Activated CD8-positive, alpha-beta T cell treated with anti-CD3 and anti-CD28 coated beads for 36 hours (primary cell): ENCODE measurements at regions of chr10 and their contacts with region 1.

Region 1: DNA sequence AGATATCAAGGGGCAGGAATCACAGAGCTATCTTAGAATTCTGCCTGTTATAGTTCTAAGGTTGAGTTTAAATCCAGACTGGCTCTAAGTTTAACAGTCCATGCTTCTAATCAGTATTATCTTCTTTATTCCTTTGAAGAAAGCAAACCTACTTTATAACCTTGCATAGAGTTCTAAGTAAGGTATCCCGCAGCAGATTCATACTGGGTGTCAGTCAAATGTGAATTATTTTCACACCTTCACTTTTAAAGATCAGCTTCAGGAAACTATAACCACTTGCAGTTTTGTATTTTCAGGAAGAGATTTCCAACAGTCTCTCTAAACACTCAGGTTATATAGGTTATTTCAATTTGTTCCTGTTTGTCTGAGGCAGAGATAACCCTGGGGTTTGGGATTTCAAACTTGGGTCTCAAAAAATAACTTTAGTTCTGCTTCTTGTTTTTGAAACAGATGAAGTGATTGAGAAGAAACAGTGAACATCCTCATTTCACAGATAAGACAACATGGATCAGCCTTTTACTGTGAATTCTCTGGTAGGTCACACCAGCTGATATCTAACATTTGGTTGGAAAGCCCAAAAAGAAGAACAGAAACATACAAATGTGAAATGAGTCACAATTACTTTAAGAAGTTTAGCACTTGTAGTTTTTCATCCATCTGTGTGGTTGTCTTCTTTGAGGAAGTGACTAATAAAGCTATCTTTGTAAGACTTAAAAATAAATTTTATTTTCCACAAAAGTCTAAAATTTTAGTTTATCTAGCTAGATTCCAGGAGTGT is 21.4 kb downstream of the STAMBPL1 start:
- DNase-seq: no peak
- ATAC-seq: peak; percentile 56
- H3K4me3 Mint-ChIP-seq: peak overlapping the region; percentile 53
- H3K27ac Mint-ChIP-seq: peak overlapping the region; percentile 96
- H3K4me1 Mint-ChIP-seq: peaks cover 63% of the 10 kb centered on the region
- H3K27me3 Mint-ChIP-seq: no peaks in the 10 kb centered on the region
- CTCF ChIP-seq: no peak

Region 2: DNA sequence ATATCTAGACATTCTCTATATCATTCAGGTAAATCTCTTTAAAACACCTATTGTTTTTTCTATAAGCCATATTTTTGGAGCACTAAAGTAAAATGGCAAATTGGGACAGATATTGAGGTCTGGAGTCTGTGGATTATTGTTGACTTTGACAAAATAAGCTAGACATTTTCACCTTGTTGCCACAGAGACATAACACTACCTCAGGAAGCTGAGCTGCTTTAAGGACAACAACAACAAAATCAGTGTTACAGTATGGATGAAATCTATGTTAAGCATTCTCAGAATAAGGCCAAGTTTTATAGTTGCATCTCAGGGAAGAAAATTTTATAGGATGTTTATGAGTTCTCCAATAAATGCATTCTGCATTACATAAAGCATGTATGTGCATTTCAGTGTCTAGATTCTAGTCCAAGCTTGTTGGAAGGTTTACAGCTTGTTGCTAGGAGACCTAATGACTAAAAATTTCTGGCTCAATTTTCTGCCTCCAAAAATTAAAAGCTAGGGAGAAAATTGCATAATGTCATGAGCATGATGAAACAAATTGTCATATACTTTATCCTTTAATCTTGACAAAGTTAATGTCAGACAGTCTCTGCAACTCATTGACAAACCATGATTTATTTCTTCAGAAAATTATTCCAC is 80.5 kb before region 1 on chr10:
- CTCF ChIA-PET with region 1: no interaction called
- POLR2A ChIA-PET with region 1: no interaction called
- intact Hi-C with region 1: no loop called
- DNase-seq: no peak
- ATAC-seq: no peak
- H3K4me3 Mint-ChIP-seq: no peak overlapping the region
- H3K27ac Mint-ChIP-seq: no peak overlapping the region
- H3K4me1 Mint-ChIP-seq: peaks cover 18% of the 10 kb centered on the region
- H3K27me3 Mint-ChIP-seq: no peaks in the 10 kb centered on the region
- CTCF ChIP-seq: no peak

Region 3: GRCh38 chr10:88851706-88852105 is 49.7 kb before region 1 on chr10 and contains the start of gene ANKRD22:
- CTCF ChIA-PET with region 1: interaction called, 3 read pairs
- POLR2A ChIA-PET with region 1: no interaction called
- intact Hi-C with region 1: loop called (anchors 5 kb)
- DNase-seq: no peak
- ATAC-seq: no peak
- H3K4me3 Mint-ChIP-seq: no peak within 1 kb of the TSS
- H3K27ac Mint-ChIP-seq: no peak within 1 kb of the TSS
- H3K4me1 Mint-ChIP-seq: peaks cover 15% of the 10 kb centered on the region
- H3K27me3 Mint-ChIP-seq: peaks cover 4% of the 10 kb centered on the region
- CTCF ChIP-seq: no peak
- total RNA-seq, gene ANKRD22: not detected

Region 4: DNA sequence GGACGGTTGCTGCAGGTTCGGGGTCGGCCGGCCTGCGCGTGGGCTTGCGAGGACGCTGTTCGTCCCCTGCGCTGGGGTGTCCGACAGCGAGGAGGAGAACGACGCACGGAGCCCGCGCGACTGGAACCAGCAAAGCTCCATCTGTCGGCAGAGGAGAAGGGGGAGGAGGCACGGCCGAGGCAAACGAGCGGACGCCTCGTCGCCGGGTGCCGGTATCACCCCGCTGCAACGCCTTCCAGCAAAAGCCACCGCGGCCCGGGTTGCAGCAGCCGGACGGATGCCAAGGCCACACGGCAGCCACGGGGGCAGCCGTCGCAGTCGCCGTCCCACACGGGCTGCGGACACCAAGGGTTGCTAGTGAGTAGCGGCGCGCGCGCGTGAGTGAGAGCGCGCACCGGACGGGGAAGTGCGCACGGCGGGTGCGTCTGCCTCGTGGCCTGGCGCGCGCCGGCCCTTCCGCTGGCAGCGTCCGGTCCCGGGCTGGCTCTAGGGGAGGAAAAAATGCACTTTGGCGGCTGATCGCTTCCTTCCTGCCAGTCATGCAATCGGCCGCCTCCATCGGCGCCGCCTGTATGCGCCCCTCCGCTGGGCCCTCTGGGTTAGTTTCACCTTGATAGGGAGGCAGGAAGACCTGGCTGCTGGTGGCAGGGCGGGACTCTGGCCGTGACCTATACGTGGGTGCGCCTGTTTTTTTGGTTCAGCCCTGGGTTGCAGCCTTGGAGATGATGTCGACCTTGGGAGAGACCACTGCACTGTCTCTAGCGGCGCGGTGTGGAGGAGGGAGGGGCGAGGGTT is 20.9 kb before region 1 on chr10:
- CTCF ChIA-PET with region 1: interaction called, 18 read pairs
- POLR2A ChIA-PET with region 1: interaction called, 16 read pairs
- intact Hi-C with region 1: no loop called
- DNase-seq: peak; percentile 89
- ATAC-seq: peak; percentile 83
- H3K4me3 Mint-ChIP-seq: peak overlapping the region; percentile 91
- H3K27ac Mint-ChIP-seq: peak overlapping the region; percentile 98
- H3K4me1 Mint-ChIP-seq: peaks cover 61% of the 10 kb centered on the region
- H3K27me3 Mint-ChIP-seq: no peaks in the 10 kb centered on the region
- CTCF ChIP-seq: no peak

Region 5: DNA sequence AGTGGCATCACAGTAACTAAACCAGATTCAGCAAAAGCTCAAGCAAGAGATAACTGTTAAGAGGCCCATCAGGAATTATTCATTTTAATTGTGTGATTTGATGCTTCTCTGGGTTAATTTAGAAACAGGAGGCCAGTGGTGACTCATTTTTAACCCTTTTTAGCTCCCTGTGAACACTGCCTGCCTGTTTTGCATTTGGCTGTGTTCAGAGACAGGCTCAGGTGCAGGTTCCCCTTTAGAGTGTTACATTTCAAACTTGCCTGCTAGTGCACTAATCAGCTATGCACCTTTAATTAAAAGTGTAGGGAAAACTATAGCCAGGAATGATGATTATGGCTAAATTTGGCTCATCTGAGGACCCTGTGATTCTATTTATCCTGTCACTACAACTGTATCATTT is 14.8 kb before region 1 on chr10:
- CTCF ChIA-PET with region 1: interaction called, 18 read pairs
- POLR2A ChIA-PET with region 1: interaction called, 16 read pairs
- intact Hi-C with region 1: no loop called
- DNase-seq: peak; percentile 44
- ATAC-seq: peak; percentile 90
- H3K4me3 Mint-ChIP-seq: no peak overlapping the region
- H3K27ac Mint-ChIP-seq: peak overlapping the region; percentile 5
- H3K4me1 Mint-ChIP-seq: peaks cover 81% of the 10 kb centered on the region
- H3K27me3 Mint-ChIP-seq: no peaks in the 10 kb centered on the region
- CTCF ChIP-seq: no peak

Region 6: DNA sequence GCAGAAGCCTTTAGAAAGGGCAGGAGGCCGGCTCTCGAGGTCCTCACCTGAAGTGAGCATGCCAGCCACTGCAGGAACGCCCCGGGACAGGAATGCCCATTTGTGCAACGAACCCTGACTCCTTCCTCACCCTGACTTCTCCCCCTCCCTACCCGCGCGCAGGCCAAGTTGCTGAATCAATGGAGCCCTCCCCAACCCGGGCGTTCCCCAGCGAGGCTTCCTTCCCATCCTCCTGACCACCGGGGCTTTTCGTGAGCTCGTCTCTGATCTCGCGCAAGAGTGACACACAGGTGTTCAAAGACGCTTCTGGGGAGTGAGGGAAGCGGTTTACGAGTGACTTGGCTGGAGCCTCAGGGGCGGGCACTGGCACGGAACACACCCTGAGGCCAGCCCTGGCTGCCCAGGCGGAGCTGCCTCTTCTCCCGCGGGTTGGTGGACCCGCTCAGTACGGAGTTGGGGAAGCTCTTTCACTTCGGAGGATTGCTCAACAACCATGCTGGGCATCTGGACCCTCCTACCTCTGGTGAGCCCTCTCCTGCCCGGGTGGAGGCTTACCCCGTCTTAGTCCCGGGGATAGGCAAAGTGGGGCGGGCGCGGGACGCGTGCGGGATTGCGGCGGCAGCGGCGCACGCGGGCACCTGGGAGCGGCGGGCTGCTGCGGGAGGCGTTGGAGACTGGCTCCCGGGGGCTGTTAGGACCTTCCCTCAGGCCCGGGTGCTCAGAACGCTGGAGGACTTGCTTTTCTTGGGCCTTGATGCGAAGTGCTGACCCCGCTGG is 89.2 kb after region 1 on chr10 and contains the start of gene FAS:
- CTCF ChIA-PET with region 1: interaction called, 3 read pairs
- POLR2A ChIA-PET with region 1: interaction called, 15 read pairs
- intact Hi-C with region 1: no loop called
- DNase-seq: peak; percentile 91
- ATAC-seq: peak; percentile 79
- H3K4me3 Mint-ChIP-seq: peak within 1 kb of the TSS; percentile 86
- H3K27ac Mint-ChIP-seq: peak within 1 kb of the TSS; percentile 96
- H3K4me1 Mint-ChIP-seq: peaks cover 54% of the 10 kb centered on the region
- H3K27me3 Mint-ChIP-seq: no peaks in the 10 kb centered on the region
- CTCF ChIP-seq: no peak
- total RNA-seq, gene FAS: 48.6 to 49.0 TPM